PC-3 (cell line): ENCODE measurements at regions of chr14 and their contacts with region 1.

Region 1: GRCh38 chr14:67695394-67695949 is at the start of gene RDH11:
- DNase-seq: peak; percentile 95
- ATAC-seq: peak; percentile 93
- H3K4me3 ChIP-seq: peak within 1 kb of the TSS; percentile 97
- H3K27ac ChIP-seq: peak within 1 kb of the TSS; percentile 93
- H3K4me1 ChIP-seq: peaks cover 16% of the 10 kb centered on the region
- H3K27me3 ChIP-seq: no peaks in the 10 kb centered on the region
- CTCF ChIP-seq: no peak
- total RNA-seq, gene RDH11: 103 and 125 TPM in 2 replicates

Region 2: GRCh38 chr14:67359775-67360648 is 335.5 kb before region 1 on chr14 and contains the starts of genes ATP6V1D and EIF2S1:
- CTCF ChIA-PET with region 1: no interaction called
- POLR2A ChIA-PET with region 1: no interaction called
- intact Hi-C with region 1: loop called (anchors 1 kb)
- DNase-seq: peak; percentile 99
- ATAC-seq: peak; percentile 85
- H3K4me3 ChIP-seq: peak within 1 kb of the TSS; percentile 83
- H3K27ac ChIP-seq: peak within 1 kb of the TSS; percentile 79
- H3K4me1 ChIP-seq: peaks cover 40% of the 10 kb centered on the region
- H3K27me3 ChIP-seq: no peaks in the 10 kb centered on the region
- CTCF ChIP-seq: peak; percentile 100
- total RNA-seq, gene ATP6V1D: 69.6 and 85.9 TPM in 2 replicates
- total RNA-seq, gene EIF2S1: 345 and 415 TPM in 2 replicates

Region 3: GRCh38 chr14:67426983-67427606 is 268.4 kb before region 1 on chr14:
- CTCF ChIA-PET with region 1: no interaction called
- POLR2A ChIA-PET with region 1: no interaction called
- intact Hi-C with region 1: no loop called
- DNase-seq: peak; percentile 87
- ATAC-seq: peak; percentile 86
- H3K4me3 ChIP-seq: no peak overlapping the region
- H3K27ac ChIP-seq: no peak overlapping the region
- H3K4me1 ChIP-seq: peaks cover 8% of the 10 kb centered on the region
- H3K27me3 ChIP-seq: 0 out of 2 replicates have a peak, but pooled peaks cover under 1% of the 10 kb centered on the region
- CTCF ChIP-seq: peak; percentile 87

Region 4: DNA sequence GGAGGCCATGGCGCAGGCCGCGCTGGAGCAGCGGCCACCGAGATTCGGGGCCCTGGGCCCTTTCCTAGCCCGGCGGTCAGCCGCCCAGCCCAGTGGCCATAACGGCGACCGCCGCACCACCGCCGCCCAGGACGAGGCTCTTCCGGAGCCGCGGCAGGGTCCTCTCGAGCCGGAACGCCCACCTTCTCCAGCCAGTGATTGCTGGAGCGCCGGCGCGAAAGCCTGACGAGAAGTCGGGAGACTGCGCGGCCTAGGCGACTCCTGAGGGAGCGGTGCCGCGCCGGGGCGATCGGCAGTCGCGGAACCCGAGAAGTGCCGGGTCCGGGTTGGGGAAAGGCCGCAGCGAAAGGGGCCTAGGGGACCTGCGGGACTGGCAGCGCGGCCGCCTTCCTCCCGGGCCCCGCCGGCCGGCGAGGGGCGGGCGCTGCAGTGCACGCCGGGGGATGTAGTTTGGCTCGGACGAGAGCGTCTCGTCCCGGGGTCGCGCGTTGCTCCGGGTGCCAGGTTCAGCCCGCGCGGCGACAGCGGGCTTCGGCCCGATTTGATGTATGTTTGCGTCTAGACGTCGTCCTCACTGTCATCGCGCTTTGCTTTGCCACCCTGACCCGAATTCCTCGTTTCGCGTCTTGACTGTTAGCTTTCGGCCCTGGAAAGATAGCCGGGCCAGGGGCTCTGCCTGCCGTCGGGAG is 20.8 kb before region 1 on chr14 and contains the start of gene VTI1B:
- CTCF ChIA-PET with region 1: no interaction called
- POLR2A ChIA-PET with region 1: interaction called, 8 read pairs
- intact Hi-C with region 1: loop called (anchors 1 kb)
- DNase-seq: peak; percentile 83
- ATAC-seq: peak; percentile 81
- H3K4me3 ChIP-seq: peak within 1 kb of the TSS; percentile 84
- H3K27ac ChIP-seq: peak within 1 kb of the TSS; percentile 80
- H3K4me1 ChIP-seq: peaks cover 19% of the 10 kb centered on the region
- H3K27me3 ChIP-seq: no peaks in the 10 kb centered on the region
- CTCF ChIP-seq: peak; percentile 30; the same call in 1 of the 2 replicates
- total RNA-seq, gene VTI1B: 72.6 and 93.8 TPM in 2 replicates